Activated CD4-positive, alpha-beta memory T cell treated with anti-CD3 and anti-CD28 coated beads for 36 hours (primary cell): ENCODE measurements at regions of chr1 and their contacts with region 1.

Region 1: DNA sequence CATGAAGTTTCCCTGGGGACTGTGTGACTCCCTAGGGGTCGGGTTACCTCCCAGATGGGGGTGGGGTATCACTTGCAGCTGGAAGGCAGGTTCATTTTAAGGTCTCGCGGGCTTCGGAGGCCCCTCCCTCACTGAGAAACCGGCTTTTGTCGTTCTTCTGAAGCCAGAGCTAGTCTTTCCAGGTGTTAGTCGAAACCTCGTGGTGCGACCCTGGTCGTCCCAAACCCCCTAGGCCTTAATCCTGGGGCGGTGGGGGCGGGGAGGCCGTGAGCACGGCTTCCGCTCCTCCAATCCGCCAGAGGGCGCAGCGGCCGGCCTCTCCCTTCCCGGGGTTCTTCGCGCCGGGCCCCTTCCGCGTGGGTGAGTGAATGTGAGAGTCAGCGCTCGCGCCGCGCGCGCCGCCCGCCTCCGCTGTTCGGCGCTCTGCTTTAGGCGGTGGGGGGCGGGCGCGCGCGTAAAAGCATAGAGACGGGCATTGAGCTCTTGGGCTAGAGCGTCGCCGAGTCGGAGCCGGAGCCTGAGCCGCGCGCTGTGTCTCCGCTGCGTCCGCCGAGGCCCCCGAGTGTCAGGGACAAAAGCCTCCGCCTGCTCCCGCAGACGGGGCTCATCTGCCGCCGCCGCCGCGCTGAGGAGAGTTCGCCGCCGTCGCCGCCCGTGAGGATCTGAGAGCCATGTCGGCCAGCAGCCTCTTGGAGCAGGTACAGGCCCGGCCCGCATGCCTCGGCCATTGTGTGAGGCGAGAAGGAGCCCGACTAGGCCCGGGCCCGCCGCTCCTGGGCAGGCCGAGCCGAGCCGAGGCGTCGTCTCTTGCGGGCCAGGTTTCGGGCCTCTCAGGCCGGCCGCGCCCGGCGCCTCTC is at the start of gene YTHDF2:
- DNase-seq: peak; percentile 99
- H3K4me3 Mint-ChIP-seq: peak within 1 kb of the TSS; percentile 83
- H3K27ac Mint-ChIP-seq: peak within 1 kb of the TSS; percentile 85
- H3K4me1 Mint-ChIP-seq: peaks cover 38% of the 10 kb centered on the region
- H3K27me3 Mint-ChIP-seq: no peaks in the 10 kb centered on the region
- total RNA-seq, gene YTHDF2: 74.3 to 80.1 TPM

Region 2: DNA sequence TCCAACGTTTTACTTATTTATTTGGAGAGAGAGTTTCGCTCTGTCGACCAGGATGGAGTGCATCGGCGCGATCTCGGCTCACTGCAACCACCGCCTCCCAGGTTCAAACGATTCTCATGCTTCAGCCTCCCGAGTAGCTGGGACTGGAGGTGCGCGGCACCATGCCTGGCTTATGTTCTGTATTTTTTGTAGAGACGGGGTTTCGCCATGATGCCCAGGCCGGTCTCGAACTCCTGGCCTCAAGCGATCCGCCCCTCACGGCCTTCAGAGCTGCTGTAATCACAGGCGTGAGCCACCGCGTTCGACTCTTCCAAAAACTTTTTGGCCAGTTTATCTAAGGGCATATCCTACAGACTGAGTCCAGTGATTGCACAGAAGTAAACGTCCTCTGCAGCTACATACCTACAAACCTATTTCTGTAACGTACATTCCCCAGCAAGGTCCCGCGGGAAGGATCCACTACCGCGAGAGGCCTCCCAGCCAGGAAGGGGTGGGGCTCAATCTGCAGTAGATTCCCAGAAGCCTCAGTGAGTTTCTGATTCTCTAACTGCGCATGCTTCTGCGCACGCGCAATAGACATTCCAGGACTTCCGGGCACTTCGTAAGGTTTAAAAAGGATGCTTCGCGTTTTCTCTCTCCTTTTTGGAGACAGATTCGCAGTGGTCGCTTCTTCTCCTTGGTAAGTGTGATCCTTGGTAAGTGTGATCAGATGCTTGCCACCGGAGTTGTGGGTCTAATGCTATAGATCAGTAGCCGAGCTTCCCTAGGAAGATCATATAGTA is 231.1 kb before region 1 on chr1 and contains the start of gene RCC1:
- CTCF ChIA-PET with region 1: no interaction called
- POLR2A ChIA-PET with region 1: interaction called, 4 read pairs
- intact Hi-C with region 1: loop called (anchors 2 kb)
- DNase-seq: peak; percentile 98
- H3K4me3 Mint-ChIP-seq: peak within 1 kb of the TSS; percentile 97
- H3K27ac Mint-ChIP-seq: peak within 1 kb of the TSS; percentile 97
- H3K4me1 Mint-ChIP-seq: peaks cover 38% of the 10 kb centered on the region
- H3K27me3 Mint-ChIP-seq: peaks cover 6% of the 10 kb centered on the region
- total RNA-seq, gene RCC1: 83.5 to 86.1 TPM

Region 3: DNA sequence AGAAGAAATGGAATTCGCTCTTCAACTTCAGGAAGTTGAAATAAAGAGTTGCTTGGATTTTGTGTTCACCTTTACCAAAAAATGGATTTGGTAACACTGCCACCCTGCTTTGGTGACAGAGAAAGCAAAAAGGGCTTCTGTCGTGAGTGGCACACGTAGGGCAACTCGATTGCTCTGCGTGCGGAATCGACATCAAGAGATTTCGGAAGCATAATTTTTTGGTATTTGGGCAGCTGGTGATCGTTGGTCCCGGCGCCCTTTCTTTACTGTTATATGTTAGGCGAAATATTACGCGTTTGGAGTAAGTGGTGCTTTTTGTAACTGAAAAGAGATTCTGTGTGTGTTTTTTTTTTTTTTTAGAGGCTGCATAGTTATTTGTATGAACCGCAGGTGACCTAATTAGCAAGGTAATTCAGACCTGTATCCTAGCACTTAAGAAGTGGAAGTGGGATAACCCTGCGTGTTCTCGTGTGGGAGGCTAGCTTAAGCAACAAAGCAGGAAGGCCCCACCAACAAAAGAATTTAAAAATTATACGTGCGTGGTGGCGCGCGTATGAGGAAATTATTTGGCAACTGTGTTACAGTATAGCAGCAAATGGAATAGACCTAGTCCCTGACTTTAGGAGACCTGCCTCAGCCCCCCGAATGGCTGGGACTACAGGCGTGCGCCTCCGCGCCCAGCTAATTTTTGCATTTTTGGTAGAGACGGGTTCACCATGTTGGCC is 88.0 kb before region 1 on chr1 and contains the start of gene RNU11:
- CTCF ChIA-PET with region 1: interaction called, 22 read pairs
- POLR2A ChIA-PET with region 1: interaction called, 33 read pairs
- intact Hi-C with region 1: loop called (anchors 1 kb)
- DNase-seq: peak; percentile 91
- H3K4me3 Mint-ChIP-seq: peak within 1 kb of the TSS; percentile 93
- H3K27ac Mint-ChIP-seq: peak within 1 kb of the TSS; percentile 99
- H3K4me1 Mint-ChIP-seq: peaks cover 27% of the 10 kb centered on the region
- H3K27me3 Mint-ChIP-seq: no peaks in the 10 kb centered on the region
- total RNA-seq, gene RNU11: not detected

Region 4: GRCh38 chr1:28718586-28719331 is 17.9 kb before region 1 on chr1:
- CTCF ChIA-PET with region 1: interaction called, 11 read pairs
- POLR2A ChIA-PET with region 1: no interaction called
- intact Hi-C with region 1: no loop called
- DNase-seq: no peak
- H3K4me3 Mint-ChIP-seq: no peak overlapping the region
- H3K27ac Mint-ChIP-seq: no peak overlapping the region
- H3K4me1 Mint-ChIP-seq: no peaks in the 10 kb centered on the region
- H3K27me3 Mint-ChIP-seq: no peaks in the 10 kb centered on the region

Region 5: GRCh38 chr1:29062157-29062942 is 325.7 kb after region 1 on chr1:
- CTCF ChIA-PET with region 1: no interaction called
- POLR2A ChIA-PET with region 1: no interaction called
- intact Hi-C with region 1: loop called (anchors 2 kb)
- DNase-seq: peak; percentile 32
- H3K4me3 Mint-ChIP-seq: peak overlapping the region; percentile 49
- H3K27ac Mint-ChIP-seq: peak overlapping the region; percentile 94
- H3K4me1 Mint-ChIP-seq: peaks cover 47% of the 10 kb centered on the region
- H3K27me3 Mint-ChIP-seq: no peaks in the 10 kb centered on the region